Spleen (tissue), 13 donors: ENCODE measurements at regions of chr1 and their contacts with region 1.

Region 1: GRCh38 chr1:58739856-58740466 is 40.1 kb upstream of the MYSM1 start:
- DNase-seq: no peak
- H3K4me3 ChIP-seq: no peak overlapping the region
- H3K27ac ChIP-seq: no peak overlapping the region
- H3K4me1 ChIP-seq: peaks cover 0 to 19% (median 6%) of the 10 kb centered on the region in 6 donors
- H3K27me3 ChIP-seq: no peaks in the 10 kb centered on the region
- CTCF ChIP-seq: peak; percentile 56 to 88 (median 83)
- POLR2A ChIP-seq: no peak

Region 2: DNA sequence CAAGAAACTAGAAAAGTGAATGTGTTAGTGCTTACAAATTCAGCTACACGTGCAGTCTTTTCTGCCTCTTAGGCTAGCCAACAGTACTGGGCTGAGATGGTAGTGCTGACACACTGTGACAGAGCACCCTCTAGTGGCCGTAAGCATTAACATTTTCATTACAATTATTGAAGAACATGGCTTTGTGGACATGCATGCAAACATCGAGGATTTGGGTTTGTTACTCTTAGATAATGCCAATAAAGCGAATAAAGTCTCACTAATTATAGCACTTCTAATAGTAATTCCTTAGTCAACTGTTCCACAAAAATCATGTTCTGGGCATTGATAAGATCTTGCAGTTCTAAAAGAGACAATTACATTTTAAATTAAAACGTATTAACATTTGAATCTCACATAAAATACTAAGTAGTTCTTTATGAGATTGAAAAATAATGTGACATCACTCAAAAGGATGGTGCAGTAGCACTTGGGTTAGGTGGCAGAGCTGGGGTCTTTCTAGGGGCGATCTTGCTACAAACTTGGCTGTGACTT is 87.2 kb before region 1 on chr1:
- intact Hi-C with region 1: no loop called
- DNase-seq: no peak
- H3K4me3 ChIP-seq: no peak overlapping the region
- H3K27ac ChIP-seq: no peak overlapping the region
- H3K4me1 ChIP-seq: peaks cover 0 to 19% (median 0%) of the 10 kb centered on the region in 6 donors
- H3K27me3 ChIP-seq: no peaks in the 10 kb centered on the region
- CTCF ChIP-seq: peak; percentile 44 to 79 (median 74)
- POLR2A ChIP-seq: no peak

Region 3: DNA sequence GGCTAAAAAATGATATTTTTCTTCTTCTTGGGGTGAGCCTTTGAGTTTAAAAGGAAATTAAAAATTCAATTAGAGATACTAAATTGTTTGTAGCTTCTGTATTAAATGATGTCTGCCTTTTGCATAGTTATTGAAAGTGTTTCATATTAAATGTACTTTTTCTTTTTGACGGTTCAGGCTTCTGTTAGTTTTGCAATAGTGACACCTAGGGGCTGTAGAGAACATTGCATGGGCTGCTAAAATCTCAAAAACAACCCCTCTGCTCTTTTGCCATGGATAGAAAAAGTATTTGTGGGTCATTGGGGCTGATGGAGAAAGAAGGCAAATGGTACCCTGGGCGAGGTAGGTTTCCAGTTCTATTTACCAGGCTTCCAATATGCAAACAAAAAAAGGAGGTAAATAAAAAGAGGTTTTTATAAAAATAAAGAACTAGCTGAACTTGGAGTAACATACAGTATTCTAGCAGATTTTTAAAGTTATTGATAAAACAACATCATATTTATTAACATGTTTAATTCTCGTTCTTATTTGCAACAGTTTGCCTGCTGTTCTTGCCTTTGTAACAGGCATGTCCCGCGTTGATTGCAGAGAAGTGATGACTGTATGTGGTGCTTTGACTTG is 959.4 kb after region 1 on chr1:
- intact Hi-C with region 1: loop called (anchors 5 kb)
- DNase-seq: no peak
- H3K4me3 ChIP-seq: no peak overlapping the region
- H3K27ac ChIP-seq: peak overlapping the region in 1 of 8 donors; percentile 86
- H3K4me1 ChIP-seq: peaks cover 16 to 38% (median 29%) of the 10 kb centered on the region in 6 donors
- H3K27me3 ChIP-seq: no peaks in the 10 kb centered on the region
- CTCF ChIP-seq: peak; percentile 82 to 95 (median 91)
- POLR2A ChIP-seq: no peak

Region 4: DNA sequence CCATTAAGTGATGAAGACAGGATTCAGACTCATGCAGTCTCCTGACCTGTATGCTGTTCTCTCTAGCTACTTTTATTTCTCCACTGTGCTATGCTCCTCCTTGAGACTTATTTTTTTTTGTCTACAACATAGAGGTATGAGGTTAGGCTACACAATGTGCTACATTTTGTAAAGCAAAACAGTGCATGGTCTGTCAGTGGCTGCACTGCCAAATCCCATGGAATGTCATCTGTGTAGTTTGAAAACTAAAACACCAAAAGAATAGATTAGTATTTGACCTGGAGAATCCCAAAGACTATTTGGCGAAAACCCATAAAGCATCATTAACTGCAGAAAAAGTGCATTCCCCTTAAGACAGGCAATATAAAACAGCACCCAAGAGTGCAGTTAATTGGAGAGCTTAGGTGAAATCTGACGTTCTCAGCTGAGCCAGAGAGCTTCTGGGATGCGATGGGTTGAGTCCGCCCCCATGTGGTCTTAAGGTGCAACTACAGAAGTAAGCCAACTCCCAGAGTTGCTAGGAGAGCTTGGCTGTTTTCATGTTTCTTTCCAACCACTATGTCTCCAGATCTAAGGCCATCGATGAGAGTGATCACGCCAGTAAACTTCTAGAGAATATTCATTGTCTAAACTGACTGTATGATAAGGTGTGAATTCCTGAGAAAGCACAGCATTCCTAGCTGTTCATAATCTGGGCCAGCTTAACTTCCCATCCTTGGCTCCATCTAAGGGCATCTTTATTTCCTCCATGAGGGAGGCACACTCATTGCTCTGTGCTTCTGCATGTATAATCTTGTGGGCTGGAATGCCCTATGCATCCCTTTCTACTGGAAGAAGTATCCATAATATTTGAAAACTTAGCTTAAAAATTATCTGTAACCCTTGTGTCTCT is 1207.3 kb after region 1 on chr1:
- intact Hi-C with region 1: loop called (anchors 10 kb)
- DNase-seq: no peak
- H3K4me3 ChIP-seq: no peak overlapping the region
- H3K27ac ChIP-seq: no peak overlapping the region
- H3K4me1 ChIP-seq: peaks cover 0 to 2% (median 0%) of the 10 kb centered on the region in 6 donors
- H3K27me3 ChIP-seq: peaks cover 0 to 4% (median 0%) of the 10 kb centered on the region in 7 donors
- CTCF ChIP-seq: peak; percentile 44 to 90 (median 78)
- POLR2A ChIP-seq: no peak